ENCODE measurements at regions of chr4 and their contacts with region 1.

Region 1: DNA sequence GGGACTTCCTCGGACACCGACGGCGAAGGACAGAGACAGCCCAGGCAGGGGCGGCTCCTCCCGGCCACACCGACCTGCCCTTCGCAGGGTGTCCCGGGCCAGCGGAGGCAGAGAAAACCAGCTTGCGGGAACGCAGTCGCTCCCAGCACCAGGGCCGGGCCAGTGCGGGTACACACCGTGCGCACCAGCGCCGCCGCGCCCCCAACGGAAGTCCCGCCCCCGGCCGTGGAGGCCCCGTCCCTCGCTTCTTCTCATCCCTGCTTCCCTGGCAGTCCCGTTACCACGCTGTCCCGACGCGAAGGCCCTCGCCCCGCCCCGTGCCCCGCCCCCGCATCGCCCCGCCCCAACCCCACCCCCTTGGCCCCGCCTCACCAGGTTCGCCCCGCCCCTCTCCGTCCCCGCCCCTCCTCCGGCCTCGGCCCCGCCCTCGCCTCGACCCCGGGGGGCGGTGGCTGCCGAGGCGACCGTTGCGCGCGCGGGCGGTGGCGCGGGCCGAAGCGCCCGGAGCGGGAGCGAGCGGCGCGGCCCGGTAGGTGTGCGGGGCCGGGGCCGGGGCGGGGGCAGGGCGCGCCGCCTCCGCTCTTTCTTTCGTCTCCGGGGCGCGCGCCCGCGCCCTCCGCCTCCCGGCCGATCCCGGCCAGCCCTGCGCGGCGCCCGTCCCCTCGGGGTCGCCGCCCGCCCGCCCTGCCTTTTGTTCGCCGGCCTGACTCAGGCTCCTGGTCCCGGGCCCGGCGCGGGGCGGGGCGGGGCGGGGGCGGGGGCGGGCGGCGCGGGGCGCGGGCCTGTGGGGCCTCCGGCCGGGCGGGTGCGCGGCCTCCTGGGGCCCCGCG is at the start of gene RGS12:
- DNase-seq: peak; percentile 71 to 92 (median 82)
- ATAC-seq: peak; percentile 85
- H3K4me3 ChIP-seq: peak within 1 kb of the TSS; percentile 79
- H3K4me3 Mint-ChIP-seq: peak within 1 kb of the TSS; percentile 95
- H3K27ac ChIP-seq: no peak within 1 kb of the TSS
- H3K27ac Mint-ChIP-seq: peak within 1 kb of the TSS; percentile 78
- H3K4me1 ChIP-seq: peaks cover 29% of the 10 kb centered on the region
- H3K4me1 Mint-ChIP-seq: peaks cover 51% of the 10 kb centered on the region
- H3K27me3 ChIP-seq: peaks cover 0 to 8% of the 10 kb centered on the region in 2 experiments
- H3K27me3 Mint-ChIP-seq: peaks cover 10% of the 10 kb centered on the region
- CTCF ChIP-seq: no peak
- total RNA-seq, gene RGS12: 14.1 to 16.9 TPM

Region 2: DNA sequence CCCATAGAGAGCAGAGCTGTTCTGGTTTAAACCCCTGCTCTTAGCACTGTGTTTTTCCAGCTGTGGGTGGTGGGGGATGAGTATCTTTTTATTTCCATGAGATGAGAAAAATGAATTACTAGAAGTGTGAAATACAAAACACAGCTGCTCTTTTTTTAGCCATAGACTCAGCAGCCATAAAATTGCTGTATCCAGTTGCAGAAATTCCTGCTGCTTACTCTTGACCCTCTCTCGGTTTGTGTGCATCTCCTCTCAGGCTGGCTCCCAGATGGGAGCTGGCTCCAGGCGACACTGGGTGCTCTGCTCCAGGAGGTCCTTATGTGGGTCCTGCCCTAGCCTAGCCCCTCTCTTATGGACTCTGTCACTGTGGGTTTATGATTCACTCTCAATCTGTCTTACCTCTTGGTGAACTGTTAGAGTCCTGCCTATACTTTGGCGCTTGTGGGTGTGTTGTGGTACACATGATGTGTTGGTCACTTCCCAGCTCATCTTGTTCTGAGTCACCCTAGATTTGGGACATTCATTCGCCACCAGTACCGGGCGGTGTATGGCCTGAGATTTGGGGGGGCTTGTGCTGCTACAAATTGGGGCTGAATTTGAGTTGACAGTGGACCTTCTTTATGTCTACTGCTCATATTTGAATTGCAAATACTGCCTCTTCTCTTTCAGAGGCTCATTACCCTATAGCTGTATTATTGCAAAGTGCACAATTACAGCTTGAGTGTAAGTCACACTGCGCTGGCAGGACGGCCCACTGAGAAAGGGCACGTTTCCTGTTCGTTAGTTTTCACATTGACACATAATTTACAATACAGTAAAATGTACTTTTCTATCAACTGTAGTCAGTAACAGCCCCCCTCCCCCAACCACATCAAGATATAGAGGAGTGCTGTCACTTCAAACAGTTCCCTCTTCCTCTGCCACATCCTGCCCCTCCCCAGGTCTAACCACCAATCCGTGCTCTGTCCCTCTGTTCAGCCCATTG is 90.8 kb before region 1 on chr4:
- CTCF ChIA-PET with region 1: no interaction called
- POLR2A ChIA-PET with region 1: interaction called, 3 read pairs
- intact Hi-C with region 1: loop called in 1 of 2 experiments (anchors 5 kb)
- DNase-seq: peak; percentile 42 to 96 (median 67)
- ATAC-seq: peak; percentile 97
- H3K4me3 ChIP-seq: peak overlapping the region; percentile 26
- H3K4me3 Mint-ChIP-seq: peak overlapping the region; percentile 74
- H3K27ac ChIP-seq: peak overlapping the region; percentile 42 to 43
- H3K27ac Mint-ChIP-seq: peak overlapping the region; percentile 78
- H3K4me1 ChIP-seq: peaks cover 48% of the 10 kb centered on the region
- H3K4me1 Mint-ChIP-seq: peaks cover 58% of the 10 kb centered on the region
- H3K27me3 ChIP-seq: no peaks in the 10 kb centered on the region
- H3K27me3 Mint-ChIP-seq: no peaks in the 10 kb centered on the region
- CTCF ChIP-seq: no peak

Region 3: GRCh38 chr4:3945511-3946290 is 652.9 kb after region 1 on chr4:
- CTCF ChIA-PET with region 1: no interaction called
- POLR2A ChIA-PET with region 1: no interaction called
- intact Hi-C with region 1: loop called in 1 of 2 experiments (anchors 10 kb)
- DNase-seq: no peak
- ATAC-seq: no peak
- H3K4me3 ChIP-seq: no peak overlapping the region
- H3K4me3 Mint-ChIP-seq: no peak overlapping the region
- H3K27ac ChIP-seq: no peak overlapping the region
- H3K27ac Mint-ChIP-seq: no peak overlapping the region
- H3K4me1 ChIP-seq: no peaks in the 10 kb centered on the region
- H3K4me1 Mint-ChIP-seq: peaks cover 11% of the 10 kb centered on the region
- H3K27me3 ChIP-seq: no peaks in the 10 kb centered on the region
- H3K27me3 Mint-ChIP-seq: peaks cover 7% of the 10 kb centered on the region
- CTCF ChIP-seq: no peak

Measured in CD4-positive, alpha-beta T cell (primary cell).